Naive thymus-derived CD4-positive, alpha-beta T cell (primary cell): ENCODE measurements at regions of chr22 and their contacts with region 1.

Region 1: DNA sequence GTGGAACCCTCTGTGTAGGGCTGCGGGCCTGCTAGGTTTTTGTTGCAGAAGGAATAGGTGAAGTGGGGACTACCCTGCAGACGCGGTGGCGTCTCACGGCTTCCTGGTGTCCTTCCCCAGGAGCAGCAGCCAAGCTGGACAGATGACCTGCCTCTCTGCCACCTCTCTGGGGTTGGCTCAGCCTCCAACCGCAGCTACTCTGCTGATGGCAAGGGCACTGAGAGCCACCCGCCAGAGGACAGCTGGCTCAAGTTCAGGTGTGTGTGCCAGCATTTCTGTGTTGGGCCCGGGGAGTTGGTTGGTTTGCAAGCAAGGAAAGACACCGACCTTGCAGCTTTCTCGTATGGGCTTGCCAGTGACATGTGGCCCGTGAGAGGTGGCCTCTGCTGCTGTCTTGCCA is 15.3 kb downstream of the TAB1 start:
- DNase-seq: no peak
- ATAC-seq: no peak
- H3K4me3 ChIP-seq: no peak overlapping the region
- H3K4me3 Mint-ChIP-seq: peak overlapping the region; percentile 14 to 78 (median 72)
- H3K27ac ChIP-seq: peak overlapping the region; percentile 38
- H3K27ac Mint-ChIP-seq: peak overlapping the region in 6 of 9 donors; percentile 79 to 93 (median 89)
- H3K4me1 ChIP-seq: peaks cover 12 to 62% of the 10 kb centered on the region in 2 donors
- H3K4me1 Mint-ChIP-seq: peaks cover 41 to 91% (median 67%) of the 10 kb centered on the region in 7 donors
- H3K27me3 ChIP-seq: no peaks in the 10 kb centered on the region
- H3K27me3 Mint-ChIP-seq: no peaks in the 10 kb centered on the region

Region 2: GRCh38 chr22:39388261-39389011 is 26.4 kb before region 1 on chr22:
- CTCF ChIA-PET with region 1: interaction called, 3 read pairs
- POLR2A ChIA-PET with region 1: interaction called, 3 read pairs
- intact Hi-C with region 1: loop called in 1 of 2 experiments (anchors 1 kb)
- DNase-seq: peak in 8 of 9 donors; percentile 16 to 89 (median 77)
- ATAC-seq: peak; percentile 96
- H3K4me3 ChIP-seq: peak overlapping the region; percentile 56
- H3K4me3 Mint-ChIP-seq: peak overlapping the region; percentile 57 to 98 (median 90)
- H3K27ac ChIP-seq: peak overlapping the region; percentile 87
- H3K27ac Mint-ChIP-seq: peak overlapping the region in 8 of 9 donors; percentile 51 to 99 (median 94)
- H3K4me1 ChIP-seq: peaks cover 0 to 4% of the 10 kb centered on the region in 2 donors
- H3K4me1 Mint-ChIP-seq: peaks cover 6 to 31% (median 18%) of the 10 kb centered on the region in 7 donors
- H3K27me3 ChIP-seq: no peaks in the 10 kb centered on the region
- H3K27me3 Mint-ChIP-seq: peaks cover 0 to 4% (median 0%) of the 10 kb centered on the region in 5 donors

Region 3: GRCh38 chr22:39395936-39396796 is 18.7 kb before region 1 on chr22:
- CTCF ChIA-PET with region 1: interaction called, 39 read pairs
- POLR2A ChIA-PET with region 1: interaction called, 75 read pairs
- intact Hi-C with region 1: loop called (anchors 1 kb)
- DNase-seq: no peak
- ATAC-seq: no peak
- H3K4me3 ChIP-seq: no peak overlapping the region
- H3K4me3 Mint-ChIP-seq: peak overlapping the region in 1 of 10 donors; percentile 34
- H3K27ac ChIP-seq: no peak overlapping the region
- H3K27ac Mint-ChIP-seq: peak overlapping the region in 2 of 9 donors; percentile 5 to 6
- H3K4me1 ChIP-seq: peaks cover 6 to 9% of the 10 kb centered on the region in 2 donors
- H3K4me1 Mint-ChIP-seq: peaks cover 5 to 19% (median 11%) of the 10 kb centered on the region in 7 donors
- H3K27me3 ChIP-seq: no peaks in the 10 kb centered on the region
- H3K27me3 Mint-ChIP-seq: peaks cover 0 to 2% (median 0%) of the 10 kb centered on the region in 5 donors

Region 4: DNA sequence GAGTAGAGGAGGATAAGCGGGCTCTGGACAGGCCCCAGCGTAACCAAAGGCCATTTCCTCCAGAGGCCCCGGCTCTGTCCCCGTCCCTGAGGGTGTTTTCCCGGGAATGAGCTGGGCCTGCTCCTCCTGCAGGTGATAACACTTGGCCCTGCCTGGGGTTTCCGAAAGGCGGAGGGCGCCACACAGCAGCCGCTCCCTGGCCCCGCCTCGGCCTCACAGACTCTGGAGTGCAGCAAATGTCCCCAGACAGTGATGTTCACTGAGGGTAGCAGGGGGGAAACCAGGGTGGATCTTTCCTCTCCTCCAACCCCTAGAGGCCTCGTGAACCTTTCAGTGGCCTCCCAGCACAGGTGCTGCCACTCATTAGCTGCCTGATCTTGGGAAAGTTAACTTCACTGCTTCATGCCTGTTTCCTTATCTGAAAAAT is 31.4 kb after region 1 on chr22:
- CTCF ChIA-PET with region 1: interaction called, 6 read pairs
- POLR2A ChIA-PET with region 1: interaction called, 3 read pairs
- intact Hi-C with region 1: loop called in 1 of 2 experiments (anchors 2 kb)
- DNase-seq: no peak
- ATAC-seq: peak; percentile 15
- H3K4me3 ChIP-seq: no peak overlapping the region
- H3K4me3 Mint-ChIP-seq: peak overlapping the region in 7 of 10 donors; percentile 23 to 80 (median 69)
- H3K27ac ChIP-seq: no peak overlapping the region
- H3K27ac Mint-ChIP-seq: peak overlapping the region in 4 of 9 donors; percentile 57 to 87 (median 78)
- H3K4me1 ChIP-seq: peaks cover 5 to 35% of the 10 kb centered on the region in 2 donors
- H3K4me1 Mint-ChIP-seq: peaks cover 17 to 33% (median 24%) of the 10 kb centered on the region in 7 donors
- H3K27me3 ChIP-seq: no peaks in the 10 kb centered on the region
- H3K27me3 Mint-ChIP-seq: no peaks in the 10 kb centered on the region